ENCODE measurements at regions of chr2 and their contacts with region 1.

Region 1: GRCh38 chr2:236562434-236562833 is 7.2 kb upstream of the ACKR3 start:
- DNase-seq: no peak
- ATAC-seq: no peak
- H3K4me3 Mint-ChIP-seq: no peak overlapping the region
- H3K27ac Mint-ChIP-seq: no peak overlapping the region
- H3K4me1 Mint-ChIP-seq: peaks cover 34% of the 10 kb centered on the region
- H3K27me3 Mint-ChIP-seq: peaks cover 2% of the 10 kb centered on the region
- CTCF ChIP-seq: no peak

Region 2: GRCh38 chr2:236551471-236552211 is 10.8 kb before region 1 on chr2:
- CTCF ChIA-PET with region 1: no interaction called
- POLR2A ChIA-PET with region 1: interaction called, 90 read pairs
- intact Hi-C with region 1: loop called (anchors 1 kb)
- DNase-seq: no peak
- ATAC-seq: peak; percentile 68
- H3K4me3 Mint-ChIP-seq: peak overlapping the region; percentile 69
- H3K27ac Mint-ChIP-seq: peak overlapping the region; percentile 87
- H3K4me1 Mint-ChIP-seq: peaks cover 86% of the 10 kb centered on the region
- H3K27me3 Mint-ChIP-seq: no peaks in the 10 kb centered on the region
- CTCF ChIP-seq: no peak